Mammary epithelial cell (primary cell): ENCODE measurements at regions of chr3 and their contacts with region 1.

Region 1: GRCh38 chr3:196039358-196039757 is 42.5 kb downstream of the TFRC start:
- DNase-seq: no peak
- H3K4me3 ChIP-seq: no peak overlapping the region
- H3K27ac ChIP-seq: no peak overlapping the region
- H3K4me1 ChIP-seq: no peaks in the 10 kb centered on the region
- H3K27me3 ChIP-seq: no peaks in the 10 kb centered on the region
- CTCF ChIP-seq: no peak

Region 2: DNA sequence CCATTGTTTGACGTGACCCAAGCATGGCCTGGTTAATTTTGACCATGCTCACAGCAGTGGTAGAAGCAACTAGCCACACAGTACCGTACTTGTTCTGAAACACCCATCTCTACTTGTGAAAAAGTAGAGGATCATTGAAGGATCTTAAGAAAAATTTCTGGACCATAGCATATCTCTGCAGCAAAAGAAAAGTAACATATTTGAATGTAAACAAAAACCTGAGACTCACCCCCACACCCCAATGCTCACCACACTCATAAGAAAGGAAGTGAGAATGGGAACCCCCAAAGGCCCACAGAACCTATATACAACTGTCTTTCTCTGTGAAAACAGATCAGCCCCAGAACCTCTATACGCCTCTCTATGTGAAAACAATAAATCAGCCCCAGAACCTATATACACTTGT is 76.3 kb after region 1 on chr3:
- CTCF ChIA-PET with region 1: no interaction called
- dilution Hi-C with region 1: loop called (anchors 5 kb)
- in situ Hi-C with region 1: no loop called
- intact Hi-C with region 1: no loop called
- DNase-seq: no peak
- H3K4me3 ChIP-seq: no peak overlapping the region
- H3K27ac ChIP-seq: no peak overlapping the region
- H3K4me1 ChIP-seq: no peaks in the 10 kb centered on the region
- H3K27me3 ChIP-seq: no peaks in the 10 kb centered on the region
- CTCF ChIP-seq: no peak

Region 3: GRCh38 chr3:196159952-196160804 is 120.8 kb after region 1 on chr3:
- CTCF ChIA-PET with region 1: no interaction called
- dilution Hi-C with region 1: loop called (anchors 5 kb)
- in situ Hi-C with region 1: no loop called
- intact Hi-C with region 1: no loop called
- DNase-seq: peak; percentile 48
- H3K4me3 ChIP-seq: no peak overlapping the region
- H3K27ac ChIP-seq: no peak overlapping the region
- H3K4me1 ChIP-seq: no peaks in the 10 kb centered on the region
- H3K27me3 ChIP-seq: no peaks in the 10 kb centered on the region
- CTCF ChIP-seq: no peak